Activated CD4-positive, alpha-beta memory T cell treated with anti-CD3 and anti-CD28 coated beads for 36 hours (primary cell): ENCODE measurements at regions of chr20 and their contacts with region 1.

Region 1: GRCh38 chr20:44552950-44553908 is 29.1 kb upstream of the PKIG start:
- DNase-seq: no peak
- H3K4me3 Mint-ChIP-seq: no peak overlapping the region
- H3K27ac Mint-ChIP-seq: peak overlapping the region; percentile 65
- H3K4me1 Mint-ChIP-seq: peaks cover 16% of the 10 kb centered on the region
- H3K27me3 Mint-ChIP-seq: no peaks in the 10 kb centered on the region

Region 2: GRCh38 chr20:44576297-44576696 is 23.1 kb after region 1 on chr20:
- CTCF ChIA-PET with region 1: no interaction called
- POLR2A ChIA-PET with region 1: no interaction called
- intact Hi-C with region 1: loop called (anchors 2 kb)
- DNase-seq: peak; percentile 16
- H3K4me3 Mint-ChIP-seq: no peak overlapping the region
- H3K27ac Mint-ChIP-seq: no peak overlapping the region
- H3K4me1 Mint-ChIP-seq: peaks cover 15% of the 10 kb centered on the region
- H3K27me3 Mint-ChIP-seq: no peaks in the 10 kb centered on the region

Region 3: DNA sequence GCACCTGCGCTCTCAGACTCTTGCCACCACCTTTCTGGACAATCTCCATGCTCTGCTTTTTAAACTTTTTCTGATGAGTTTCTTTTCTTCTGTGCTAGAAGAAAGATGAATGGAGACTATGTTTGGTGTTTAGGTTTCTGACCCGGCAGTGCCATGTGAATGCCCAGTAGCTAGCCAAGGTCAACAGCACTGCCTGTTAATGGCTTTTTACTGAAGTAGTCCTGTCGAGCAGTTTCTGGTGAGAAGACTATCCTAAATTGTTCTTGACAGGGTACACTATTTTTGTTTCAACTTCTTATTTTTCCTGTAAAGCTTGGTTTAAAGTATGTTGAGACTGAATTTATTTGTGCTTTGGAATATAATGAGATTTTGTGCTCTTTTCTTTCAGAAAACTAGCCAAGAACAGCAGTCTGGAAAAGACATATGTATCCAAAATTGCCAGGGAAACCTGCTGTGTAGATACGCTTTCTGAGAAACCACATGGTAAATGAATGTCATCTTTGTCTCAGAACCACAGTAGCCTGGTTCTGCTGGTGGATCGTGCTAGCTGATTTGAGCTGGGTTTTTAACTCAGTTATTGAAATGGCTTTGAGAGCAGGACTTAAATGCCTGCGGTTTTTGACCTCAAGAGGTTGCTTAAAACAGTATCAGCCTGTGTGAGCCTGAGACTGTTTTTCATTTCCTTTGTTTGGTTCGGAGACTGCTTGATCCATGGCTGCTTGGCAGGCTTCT is 499.6 kb after region 1 on chr20:
- CTCF ChIA-PET with region 1: no interaction called
- POLR2A ChIA-PET with region 1: no interaction called
- intact Hi-C with region 1: no loop called
- DNase-seq: peak; percentile 41
- H3K4me3 Mint-ChIP-seq: no peak overlapping the region
- H3K27ac Mint-ChIP-seq: peak overlapping the region; percentile 74
- H3K4me1 Mint-ChIP-seq: peaks cover 77% of the 10 kb centered on the region
- H3K27me3 Mint-ChIP-seq: no peaks in the 10 kb centered on the region